Calu3 (cell line): ENCODE measurements at regions of chr12 and their contacts with region 1.

Region 1: GRCh38 chr12:125983093-125983783 is 918.0 kb downstream of the AACS start:
- DNase-seq: peak; percentile 93
- H3K4me3 Mint-ChIP-seq: peak overlapping the region; percentile 87
- H3K27ac Mint-ChIP-seq: peak overlapping the region; percentile 84
- H3K4me1 Mint-ChIP-seq: peaks cover 21% of the 10 kb centered on the region
- H3K27me3 Mint-ChIP-seq: no peaks in the 10 kb centered on the region
- CTCF ChIP-seq: no peak

Region 2: DNA sequence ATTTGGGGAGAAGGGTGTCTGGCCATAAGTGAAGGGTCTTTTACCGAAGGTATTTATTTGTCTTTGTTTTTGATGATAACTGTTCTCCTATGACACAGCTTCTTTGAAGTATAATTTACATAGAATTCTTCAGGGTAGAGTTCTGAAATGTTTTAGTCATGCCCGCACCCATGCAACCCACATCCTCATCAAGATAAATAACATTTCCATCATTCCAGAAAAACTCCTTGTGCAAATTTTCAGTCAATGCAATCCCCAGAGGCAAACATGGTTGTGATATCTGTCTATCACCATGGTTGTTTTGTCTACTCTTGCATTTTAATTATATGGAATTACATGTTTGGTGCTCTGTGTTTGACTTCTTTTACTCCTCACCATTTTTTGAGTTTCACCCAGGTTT is 80.3 kb before region 1 on chr12:
- CTCF ChIA-PET with region 1: no interaction called
- intact Hi-C with region 1: no loop called
- DNase-seq: no peak
- H3K4me3 Mint-ChIP-seq: no peak overlapping the region
- H3K27ac Mint-ChIP-seq: no peak overlapping the region
- H3K4me1 Mint-ChIP-seq: no peaks in the 10 kb centered on the region
- H3K27me3 Mint-ChIP-seq: no peaks in the 10 kb centered on the region
- CTCF ChIP-seq: no peak

Region 3: GRCh38 chr12:126033731-126034130 is 50.5 kb after region 1 on chr12:
- CTCF ChIA-PET with region 1: interaction called, 3 read pairs
- intact Hi-C with region 1: loop called (anchors 5 kb)
- DNase-seq: no peak
- H3K4me3 Mint-ChIP-seq: no peak overlapping the region
- H3K27ac Mint-ChIP-seq: peak overlapping the region; percentile 35
- H3K4me1 Mint-ChIP-seq: peaks cover 61% of the 10 kb centered on the region
- H3K27me3 Mint-ChIP-seq: no peaks in the 10 kb centered on the region
- CTCF ChIP-seq: no peak